K562 (cell line): ENCODE measurements at regions of chr9 and their contacts with region 1.

Region 1: GRCh38 chr9:130860458-130861316 is 25.6 kb downstream of the ABL1 start:
- DNase-seq: peak; percentile 55 to 95 (median 94)
- ATAC-seq: peak; percentile 87
- H3K4me3 ChIP-seq: no peak overlapping the region
- H3K27ac ChIP-seq: peak overlapping the region; percentile 6; the same call in 2 of the 3 replicates
- H3K4me1 ChIP-seq: peaks cover 10% of the 10 kb centered on the region in 2 experiments; a peak in 4 of 5 replicates
- H3K27me3 ChIP-seq: no peaks in the 10 kb centered on the region
- CTCF ChIP-seq: no peak
- EP300 ChIP-seq: no peak
- POLR2A ChIP-seq: no peak
- RAD21 ChIP-seq: no peak

Region 2: DNA sequence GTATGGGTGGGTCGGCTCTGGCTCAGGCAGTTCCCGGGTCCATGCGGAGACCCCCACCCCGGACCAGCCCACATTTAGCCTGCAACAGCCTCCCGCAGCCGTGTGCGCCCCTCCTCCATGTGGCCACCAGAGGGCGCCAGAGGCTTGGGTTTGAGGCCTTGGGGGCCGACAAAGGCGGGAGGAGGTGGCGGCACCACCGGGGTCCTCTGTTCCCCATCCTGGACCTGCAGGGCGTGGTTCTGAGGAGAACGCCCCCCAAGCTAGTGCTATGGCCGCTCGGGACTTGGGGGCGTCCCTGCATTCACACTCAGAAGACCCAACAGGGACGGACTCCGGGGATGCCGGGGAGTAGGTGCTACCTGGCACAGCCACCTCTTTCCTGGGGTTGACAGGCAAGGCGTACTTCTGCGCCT is 399.5 kb before region 1 on chr9:
- CTCF ChIA-PET with region 1: interaction called, 7 read pairs
- POLR2A ChIA-PET with region 1: no interaction called
- in situ Hi-C with region 1: loop called (anchors 10 kb)
- intact Hi-C with region 1: loop called (anchors 5 kb)
- DNase-seq: peak; percentile 71 to 81 (median 80)
- ATAC-seq: peak; percentile 84
- H3K4me3 ChIP-seq: no peak overlapping the region
- H3K27ac ChIP-seq: no peak overlapping the region
- H3K4me1 ChIP-seq: peaks cover 0 to 27% of the 10 kb centered on the region in 2 experiments; a peak in 2 of 5 replicates
- H3K27me3 ChIP-seq: peaks cover 5 to 36% of the 10 kb centered on the region in 2 experiments; a peak in 3 of 5 replicates
- CTCF ChIP-seq: peak; percentile 79 to 88 (median 81)
- EP300 ChIP-seq: no peak
- POLR2A ChIP-seq: no peak
- RAD21 ChIP-seq: peak; percentile 96 to 98

Region 3: DNA sequence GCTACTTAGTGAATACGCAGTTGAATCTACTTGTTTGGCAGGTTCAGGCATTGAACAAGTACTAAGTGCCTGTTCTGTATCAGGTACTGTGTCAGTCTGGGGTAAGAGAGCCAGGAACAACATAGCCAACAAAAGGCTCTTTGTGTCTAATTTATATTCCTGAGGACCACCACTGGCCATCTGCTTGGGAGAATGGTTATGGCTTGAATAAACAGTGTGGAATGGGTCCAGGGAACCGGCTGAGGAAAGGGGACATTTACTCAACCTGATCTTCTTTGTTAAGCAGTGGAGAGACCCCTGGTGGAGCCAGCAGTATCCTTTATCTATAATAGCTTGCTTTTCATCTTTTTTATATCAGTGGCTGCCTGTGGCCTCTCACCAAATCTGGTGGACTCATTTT is 128.6 kb before region 1 on chr9:
- CTCF ChIA-PET with region 1: no interaction called
- POLR2A ChIA-PET with region 1: interaction called, 4 read pairs
- in situ Hi-C with region 1: no loop called
- intact Hi-C with region 1: loop called (anchors 1 kb)
- DNase-seq: peak; percentile 60 to 83 (median 80)
- ATAC-seq: peak; percentile 79
- H3K4me3 ChIP-seq: no peak overlapping the region
- H3K27ac ChIP-seq: no peak overlapping the region
- H3K4me1 ChIP-seq: no peaks in the 10 kb centered on the region
- H3K27me3 ChIP-seq: no peaks in the 10 kb centered on the region
- CTCF ChIP-seq: no peak
- EP300 ChIP-seq: no peak
- POLR2A ChIP-seq: no peak
- RAD21 ChIP-seq: no peak

Region 4: DNA sequence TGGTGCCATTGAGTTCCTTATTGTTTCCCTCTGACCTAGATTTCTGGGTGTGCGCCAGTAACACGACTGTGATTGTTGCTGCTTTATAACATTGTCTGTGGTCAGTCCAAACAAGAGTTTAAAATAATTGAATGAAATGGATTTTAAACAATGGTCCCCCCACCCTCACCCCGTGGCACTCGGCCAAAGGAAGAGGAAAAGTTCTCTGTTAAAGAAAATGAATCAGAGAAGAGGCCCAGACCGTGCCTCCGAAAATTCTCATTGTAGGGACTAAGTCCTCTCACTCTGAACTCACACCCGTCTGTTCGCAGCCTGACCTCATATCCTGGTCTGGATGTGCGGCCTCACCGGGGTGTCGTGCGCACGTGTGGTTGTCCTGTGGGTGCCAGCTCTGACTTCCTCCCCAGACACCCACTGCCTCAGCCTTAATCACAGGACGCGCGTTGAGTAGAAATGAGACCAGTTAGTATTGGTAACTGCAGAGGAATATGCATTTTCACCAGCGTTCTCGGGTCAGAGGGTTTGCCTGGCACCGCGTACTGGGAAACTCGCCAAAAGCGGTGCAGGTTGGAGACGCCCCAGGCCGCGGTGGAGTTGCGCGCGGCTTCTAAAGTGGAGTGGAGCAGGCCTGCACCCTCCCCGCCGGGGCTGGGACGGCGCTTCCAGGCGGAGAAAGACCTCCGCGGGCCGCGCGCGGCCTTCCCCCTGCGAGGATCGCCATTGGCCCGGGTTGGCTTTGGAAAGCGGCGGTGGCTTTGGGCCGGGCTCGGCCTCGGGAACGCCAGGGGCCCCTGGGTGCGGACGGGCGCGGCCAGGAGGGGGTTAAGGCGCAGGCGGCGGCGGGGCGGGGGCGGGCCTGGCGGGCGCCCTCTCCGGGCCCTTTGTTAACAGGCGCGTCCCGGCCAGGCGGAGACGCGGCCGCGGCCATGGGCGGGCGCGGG is 26.0 kb before region 1 on chr9 and contains the start of gene ABL1:
- CTCF ChIA-PET with region 1: interaction called, 4 read pairs
- POLR2A ChIA-PET with region 1: interaction called, 147 read pairs
- in situ Hi-C with region 1: no loop called
- intact Hi-C with region 1: no loop called
- DNase-seq: peak; percentile 70 to 94 (median 90)
- ATAC-seq: peak; percentile 63
- H3K4me3 ChIP-seq: peak within 1 kb of the TSS; percentile 17
- H3K27ac ChIP-seq: no peak within 1 kb of the TSS
- H3K4me1 ChIP-seq: peaks cover 0 to 11% of the 10 kb centered on the region in 2 experiments; a peak in 2 of 5 replicates
- H3K27me3 ChIP-seq: no peaks in the 10 kb centered on the region
- CTCF ChIP-seq: no peak
- EP300 ChIP-seq: no peak
- POLR2A ChIP-seq: no peak
- RAD21 ChIP-seq: no peak
- polyA plus RNA-seq, gene ABL1: 1.5 to 1.6 TPM

Region 5: GRCh38 chr9:130847327-130848217 is 13.1 kb before region 1 on chr9:
- CTCF ChIA-PET with region 1: interaction called, 8 read pairs
- POLR2A ChIA-PET with region 1: interaction called, 147 read pairs
- in situ Hi-C with region 1: no loop called
- intact Hi-C with region 1: no loop called
- DNase-seq: peak in 1 of 4 experiments; percentile 66
- ATAC-seq: no peak
- H3K4me3 ChIP-seq: no peak overlapping the region
- H3K27ac ChIP-seq: no peak overlapping the region
- H3K4me1 ChIP-seq: peaks cover 26 to 29% of the 10 kb centered on the region in 2 experiments
- H3K27me3 ChIP-seq: no peaks in the 10 kb centered on the region
- CTCF ChIP-seq: no peak
- EP300 ChIP-seq: no peak
- POLR2A ChIP-seq: no peak
- RAD21 ChIP-seq: no peak